Activated naive CD4-positive, alpha-beta T cell treated with anti-CD3 and anti-CD28 coated beads for 36 hours (primary cell): ENCODE measurements at regions of chr12 and their contacts with region 1.

Region 1: DNA sequence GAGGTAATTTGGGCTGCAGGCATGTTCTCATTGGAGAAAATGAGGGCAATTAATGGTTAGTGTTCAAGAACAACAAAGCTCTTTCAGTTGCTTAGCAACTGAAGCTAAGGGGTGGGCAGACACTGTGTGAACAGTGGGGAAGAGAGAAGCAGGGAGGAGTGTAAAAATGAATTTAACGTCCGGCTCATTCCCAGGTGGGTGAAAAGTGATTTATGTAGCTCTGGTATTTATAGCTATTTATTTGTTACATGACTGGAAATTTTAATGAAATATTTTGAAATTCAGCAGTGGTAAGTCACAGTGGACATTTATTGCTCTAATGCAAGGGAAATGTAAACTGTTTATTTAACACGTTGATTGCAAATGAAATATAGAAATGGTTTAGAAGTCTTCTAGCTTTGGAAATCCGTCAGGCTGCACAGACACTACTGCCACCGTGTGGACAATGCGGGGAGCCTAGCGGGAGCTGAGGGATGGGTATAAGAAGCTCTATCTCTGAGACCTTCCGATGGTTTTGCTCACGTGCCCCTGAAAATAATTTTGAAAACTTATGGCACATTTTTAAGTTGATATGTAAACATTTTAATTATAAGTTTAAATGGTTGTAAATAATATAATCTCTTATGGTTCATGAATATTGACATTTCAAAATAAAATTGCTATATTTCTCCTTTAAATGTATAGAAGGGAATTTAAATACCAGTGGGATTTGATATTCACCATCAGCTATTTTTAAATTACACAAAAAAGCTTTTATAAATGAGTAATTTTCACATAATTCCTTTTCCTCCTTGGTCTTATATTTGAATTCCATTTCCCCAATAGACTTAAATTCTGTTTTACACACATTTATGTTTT is 54.4 kb downstream of the E2F7 start:
- DNase-seq: peak; percentile 84
- H3K4me3 Mint-ChIP-seq: no peak overlapping the region
- H3K27ac Mint-ChIP-seq: no peak overlapping the region
- H3K4me1 Mint-ChIP-seq: peaks cover 5% of the 10 kb centered on the region
- H3K27me3 Mint-ChIP-seq: peaks cover 16% of the 10 kb centered on the region

Region 2: DNA sequence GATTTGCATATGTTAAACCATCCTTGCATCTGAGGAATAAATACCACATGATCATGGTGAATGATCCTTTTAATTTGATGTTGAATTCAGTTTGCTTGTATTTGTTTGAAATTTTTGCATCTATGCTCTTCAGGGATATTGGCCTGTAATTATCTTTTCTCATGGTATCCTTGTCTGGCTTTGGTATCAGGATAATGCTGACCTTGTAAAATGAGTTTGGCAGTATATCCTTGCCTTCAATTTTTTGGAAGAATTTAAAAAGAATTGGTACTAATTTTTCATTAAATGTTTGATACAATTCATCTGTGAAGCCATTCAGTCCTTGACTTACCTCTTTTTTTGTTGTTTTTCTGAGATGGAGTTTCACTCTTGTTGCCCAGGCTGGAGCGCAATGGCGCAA is 30.7 kb before region 1 on chr12:
- CTCF ChIA-PET with region 1: no interaction called
- intact Hi-C with region 1: no loop called
- DNase-seq: no peak
- H3K4me3 Mint-ChIP-seq: no peak overlapping the region
- H3K27ac Mint-ChIP-seq: no peak overlapping the region
- H3K4me1 Mint-ChIP-seq: no peaks in the 10 kb centered on the region
- H3K27me3 Mint-ChIP-seq: peaks cover 10% of the 10 kb centered on the region

Region 3: DNA sequence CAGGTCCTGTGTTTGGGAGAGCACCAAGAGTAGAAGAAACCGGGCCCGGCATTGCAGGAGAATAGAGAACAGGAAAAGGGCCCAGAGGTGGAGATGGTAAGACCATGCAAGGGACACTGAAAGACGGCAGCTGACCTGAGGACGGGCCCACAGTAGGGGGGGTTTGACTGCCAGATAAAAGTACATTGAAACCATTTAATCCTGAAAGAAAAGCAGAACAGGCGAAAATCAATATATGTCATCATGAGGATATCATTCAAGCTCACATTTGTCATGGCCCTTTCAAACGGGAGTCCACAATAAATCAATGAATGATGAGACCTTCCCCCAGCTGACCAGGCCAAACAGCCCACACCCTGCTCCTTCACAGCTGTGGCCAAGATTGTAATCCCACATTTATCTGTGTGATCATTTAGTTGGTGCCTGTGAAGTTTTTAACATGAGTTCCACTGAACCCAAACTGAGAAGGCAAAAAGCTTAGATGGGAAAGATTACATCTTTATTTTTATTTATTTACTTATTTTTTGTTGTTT is 14.9 kb after region 1 on chr12:
- CTCF ChIA-PET with region 1: interaction called, 22 read pairs
- intact Hi-C with region 1: no loop called
- DNase-seq: no peak
- H3K4me3 Mint-ChIP-seq: no peak overlapping the region
- H3K27ac Mint-ChIP-seq: no peak overlapping the region
- H3K4me1 Mint-ChIP-seq: no peaks in the 10 kb centered on the region
- H3K27me3 Mint-ChIP-seq: no peaks in the 10 kb centered on the region

Region 4: DNA sequence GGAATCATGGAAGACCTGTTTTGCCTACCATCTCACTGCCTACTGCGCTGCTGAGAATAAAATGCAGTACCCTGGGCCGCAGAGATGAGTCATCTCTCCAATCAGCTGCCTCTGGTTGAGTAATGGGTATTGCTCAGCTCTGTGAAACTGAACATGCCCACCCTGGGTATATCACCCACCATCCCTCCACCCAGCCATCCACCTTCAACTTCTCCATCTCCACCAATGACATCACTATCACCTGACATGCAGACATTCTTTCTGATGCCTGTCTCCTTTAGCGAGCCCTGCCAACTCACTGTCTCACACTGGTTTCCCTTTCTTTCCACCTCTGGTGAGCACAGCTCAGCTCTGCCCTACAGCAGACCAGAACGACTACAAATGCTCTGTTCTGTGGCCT is 20.8 kb after region 1 on chr12:
- CTCF ChIA-PET with region 1: interaction called, 16 read pairs
- intact Hi-C with region 1: no loop called
- DNase-seq: no peak
- H3K4me3 Mint-ChIP-seq: no peak overlapping the region
- H3K27ac Mint-ChIP-seq: no peak overlapping the region
- H3K4me1 Mint-ChIP-seq: no peaks in the 10 kb centered on the region
- H3K27me3 Mint-ChIP-seq: no peaks in the 10 kb centered on the region

Region 5: DNA sequence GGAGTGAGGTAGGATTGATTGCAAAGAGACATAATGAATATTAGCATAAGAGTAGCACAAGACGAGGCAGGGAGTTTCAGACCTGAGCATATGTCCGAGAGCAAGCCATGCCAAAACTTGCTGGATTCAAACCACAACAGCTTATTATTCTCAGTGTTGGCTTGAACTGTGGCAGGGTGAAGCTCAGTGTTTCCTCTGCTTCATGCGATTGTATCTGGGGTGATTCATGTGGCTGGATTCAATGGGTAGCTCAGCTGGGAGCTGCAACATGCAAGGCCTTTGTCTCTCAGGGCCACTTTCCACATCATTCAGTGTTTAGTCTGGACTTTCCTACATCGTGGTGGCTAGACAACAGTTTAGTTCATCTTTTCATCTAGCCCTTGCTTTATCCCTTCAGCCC is 76.5 kb after region 1 on chr12:
- CTCF ChIA-PET with region 1: no interaction called
- intact Hi-C with region 1: no loop called
- DNase-seq: no peak
- H3K4me3 Mint-ChIP-seq: no peak overlapping the region
- H3K27ac Mint-ChIP-seq: no peak overlapping the region
- H3K4me1 Mint-ChIP-seq: no peaks in the 10 kb centered on the region
- H3K27me3 Mint-ChIP-seq: peaks cover 3% of the 10 kb centered on the region